A673 (cell line): ENCODE measurements at regions of chr17 and their contacts with region 1.

Region 1: GRCh38 chr17:57671667-57672632 is 73.1 kb downstream of the CCDC182 start:
- DNase-seq: peak; percentile 82
- H3K4me3 ChIP-seq: no peak overlapping the region
- H3K27ac ChIP-seq: no peak overlapping the region
- H3K4me1 ChIP-seq: peaks cover 5% of the 10 kb centered on the region
- H3K27me3 ChIP-seq: no peaks in the 10 kb centered on the region
- CTCF ChIP-seq: peak; percentile 98

Region 2: GRCh38 chr17:57535249-57535966 is 136.5 kb before region 1 on chr17:
- CTCF ChIA-PET with region 1: no interaction called
- POLR2A ChIA-PET with region 1: no interaction called
- intact Hi-C with region 1: no loop called
- DNase-seq: peak; percentile 90
- H3K4me3 ChIP-seq: no peak overlapping the region
- H3K27ac ChIP-seq: no peak overlapping the region
- H3K4me1 ChIP-seq: peaks cover 48% of the 10 kb centered on the region
- H3K27me3 ChIP-seq: no peaks in the 10 kb centered on the region
- CTCF ChIP-seq: no peak

Region 3: DNA sequence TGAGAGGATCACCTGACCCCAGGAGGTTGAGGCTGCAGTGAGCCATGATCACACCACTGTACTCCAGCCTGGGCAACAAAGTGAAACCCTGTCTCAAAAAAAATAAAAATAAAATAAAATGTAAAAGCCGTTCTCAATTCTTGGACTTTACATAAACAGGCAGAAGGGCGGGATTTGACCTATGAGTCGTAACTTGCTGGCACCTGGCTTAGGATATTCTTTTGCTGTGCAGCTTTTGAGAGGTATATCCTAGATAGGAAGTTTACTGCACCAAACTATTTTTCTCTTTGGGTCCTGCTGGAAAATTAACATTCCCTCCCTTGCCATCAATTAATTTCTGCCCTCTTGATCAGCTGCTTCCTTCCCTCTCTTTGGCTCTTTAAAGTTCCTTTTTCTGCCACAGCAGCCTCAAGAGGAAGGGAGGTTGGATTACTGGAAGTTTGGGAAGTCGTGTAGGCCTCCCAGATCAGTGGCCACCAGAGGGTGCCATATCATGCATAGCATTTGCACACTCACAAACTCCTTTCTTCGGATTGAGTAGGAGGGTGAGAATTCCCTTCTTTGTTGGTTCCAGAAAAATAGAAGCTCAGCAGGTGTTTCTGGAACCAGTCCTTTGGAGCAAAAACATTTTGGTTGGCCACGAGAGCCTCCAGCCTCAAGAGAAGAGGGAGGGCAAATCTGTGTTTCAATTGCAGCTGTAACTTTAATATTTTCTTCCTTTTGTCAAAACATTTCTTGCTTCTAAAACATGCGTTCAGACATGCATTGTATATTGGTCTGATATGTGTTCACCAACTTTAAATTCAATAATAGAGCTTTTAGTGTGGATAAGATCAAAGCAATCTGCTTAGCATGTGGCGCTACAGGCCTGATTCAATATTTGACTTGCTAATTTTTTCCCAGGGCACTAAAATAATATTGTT is 74.2 kb before region 1 on chr17:
- CTCF ChIA-PET with region 1: interaction called, 23 read pairs
- POLR2A ChIA-PET with region 1: no interaction called
- intact Hi-C with region 1: loop called (anchors 5 kb)
- DNase-seq: peak; percentile 85
- H3K4me3 ChIP-seq: no peak overlapping the region
- H3K27ac ChIP-seq: no peak overlapping the region
- H3K4me1 ChIP-seq: peaks cover 10% of the 10 kb centered on the region
- H3K27me3 ChIP-seq: no peaks in the 10 kb centered on the region
- CTCF ChIP-seq: peak; percentile 92

Region 4: DNA sequence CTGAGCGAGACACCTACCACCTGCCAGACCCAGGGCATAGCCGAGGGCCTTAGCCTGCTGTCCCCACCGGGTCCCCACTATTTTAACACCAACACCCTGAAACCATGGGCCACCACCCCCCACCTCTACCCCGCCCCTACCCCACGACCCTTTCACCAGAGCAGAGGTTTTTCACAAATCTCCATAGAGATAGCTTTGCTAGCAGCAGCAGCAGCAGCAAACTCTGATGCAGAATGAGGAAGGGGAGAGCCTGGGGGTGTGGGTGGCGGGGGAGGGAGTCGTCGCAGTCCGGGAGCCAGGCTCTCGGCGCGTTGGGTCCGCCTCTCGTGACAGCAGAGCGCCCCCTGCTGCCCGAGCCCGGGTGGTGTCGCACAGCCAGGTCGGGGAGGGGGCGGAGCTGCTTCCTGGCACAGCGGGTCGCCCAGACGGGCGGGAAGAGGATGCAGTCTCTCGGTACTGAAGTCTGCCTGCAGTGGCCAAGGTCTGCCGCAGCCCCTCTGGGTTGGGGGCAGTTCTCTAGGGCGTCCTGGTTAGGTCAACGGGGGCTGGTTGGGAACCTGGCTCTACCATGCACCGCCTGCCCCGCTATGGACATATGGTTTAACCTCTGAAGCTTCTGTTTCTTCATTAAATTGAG is 111.3 kb after region 1 on chr17:
- CTCF ChIA-PET with region 1: interaction called, 20 read pairs
- POLR2A ChIA-PET with region 1: no interaction called
- intact Hi-C with region 1: no loop called
- DNase-seq: peak; percentile 92
- H3K4me3 ChIP-seq: no peak overlapping the region
- H3K27ac ChIP-seq: peak overlapping the region; percentile 52
- H3K4me1 ChIP-seq: peaks cover 51% of the 10 kb centered on the region
- H3K27me3 ChIP-seq: no peaks in the 10 kb centered on the region
- CTCF ChIP-seq: peak; percentile 99